Endothelial cell of umbilical vein (primary cell): ENCODE measurements at regions of chr1 and their contacts with region 1.

Region 1: DNA sequence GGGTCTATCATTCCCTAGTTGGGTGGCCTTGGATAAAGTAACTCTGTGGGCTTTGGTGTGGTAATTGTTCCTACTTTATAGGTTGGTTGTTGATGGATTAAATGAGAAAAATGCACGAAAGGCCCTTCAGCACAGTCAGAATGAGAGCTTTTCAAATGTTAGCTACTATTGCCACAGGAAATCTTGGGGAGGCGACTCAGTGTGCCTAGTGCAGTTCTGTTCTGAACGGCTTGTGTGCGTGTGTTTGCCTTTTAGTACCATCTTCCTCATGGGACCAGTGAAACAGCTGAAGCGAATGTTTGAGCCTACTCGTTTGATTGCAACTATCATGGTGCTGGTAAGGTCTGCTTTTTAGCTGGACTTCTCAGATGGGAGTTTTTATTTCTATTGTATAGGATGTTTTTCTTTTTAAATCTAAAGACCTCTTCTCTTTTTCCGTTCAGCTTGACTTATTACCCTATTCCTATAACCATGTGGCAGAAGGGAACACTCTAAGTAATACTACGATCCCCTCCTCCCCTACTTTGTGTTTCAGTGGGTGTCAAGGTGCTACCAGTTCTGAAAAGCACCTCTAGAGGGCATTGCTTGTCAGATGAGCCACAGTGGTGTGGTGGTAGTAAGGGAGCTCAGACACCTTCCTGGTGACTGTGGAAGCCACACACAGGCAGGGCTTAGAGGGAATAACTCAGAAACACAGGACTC is 9.2 kb downstream of the SFT2D2 start:
- DNase-seq: peak; percentile 64
- H3K4me3 ChIP-seq: no peak overlapping the region
- H3K27ac ChIP-seq: no peak overlapping the region
- H3K4me1 ChIP-seq: no peaks in the 10 kb centered on the region
- H3K27me3 ChIP-seq: no peaks in the 10 kb centered on the region
- CTCF ChIP-seq: peak; percentile 75 to 79
- POLR2A ChIP-seq: no peak

Region 2: GRCh38 chr1:168031198-168031597 is 203.8 kb before region 1 on chr1:
- CTCF ChIA-PET with region 1: no interaction called
- POLR2A ChIA-PET with region 1: no interaction called
- dilution Hi-C with region 1: no loop called
- intact Hi-C with region 1: no loop called
- DNase-seq: no peak
- H3K4me3 ChIP-seq: no peak overlapping the region
- H3K27ac ChIP-seq: no peak overlapping the region
- H3K4me1 ChIP-seq: no peaks in the 10 kb centered on the region
- H3K27me3 ChIP-seq: no peaks in the 10 kb centered on the region
- CTCF ChIP-seq: no peak
- POLR2A ChIP-seq: no peak

Region 3: GRCh38 chr1:168287237-168287664 is 52.3 kb after region 1 on chr1:
- CTCF ChIA-PET with region 1: interaction called, 11 read pairs
- POLR2A ChIA-PET with region 1: no interaction called
- dilution Hi-C with region 1: no loop called
- intact Hi-C with region 1: no loop called
- DNase-seq: peak; percentile 55
- H3K4me3 ChIP-seq: no peak overlapping the region
- H3K27ac ChIP-seq: peak overlapping the region; percentile 42
- H3K4me1 ChIP-seq: peaks cover 14% of the 10 kb centered on the region
- H3K27me3 ChIP-seq: no peaks in the 10 kb centered on the region
- CTCF ChIP-seq: no peak
- POLR2A ChIP-seq: no peak

Region 4: GRCh38 chr1:168321945-168322344 is 86.9 kb after region 1 on chr1:
- CTCF ChIA-PET with region 1: interaction called, 86 read pairs
- POLR2A ChIA-PET with region 1: no interaction called
- dilution Hi-C with region 1: no loop called
- intact Hi-C with region 1: loop called (anchors 1 kb)
- DNase-seq: peak; percentile 56
- H3K4me3 ChIP-seq: no peak overlapping the region
- H3K27ac ChIP-seq: no peak overlapping the region
- H3K4me1 ChIP-seq: peaks cover 18% of the 10 kb centered on the region
- H3K27me3 ChIP-seq: no peaks in the 10 kb centered on the region
- CTCF ChIP-seq: peak; percentile 4 to 40
- POLR2A ChIP-seq: no peak

Region 5: GRCh38 chr1:168439456-168440375 is 204.7 kb after region 1 on chr1:
- CTCF ChIA-PET with region 1: interaction called, 12 read pairs
- POLR2A ChIA-PET with region 1: no interaction called
- dilution Hi-C with region 1: no loop called
- intact Hi-C with region 1: no loop called
- DNase-seq: peak; percentile 63
- H3K4me3 ChIP-seq: no peak overlapping the region
- H3K27ac ChIP-seq: no peak overlapping the region
- H3K4me1 ChIP-seq: no peaks in the 10 kb centered on the region
- H3K27me3 ChIP-seq: no peaks in the 10 kb centered on the region
- CTCF ChIP-seq: peak; percentile 69 to 74
- POLR2A ChIP-seq: no peak